GM10248 (cell line): ENCODE measurements at regions of chr11 and their contacts with region 1.

Region 1: DNA sequence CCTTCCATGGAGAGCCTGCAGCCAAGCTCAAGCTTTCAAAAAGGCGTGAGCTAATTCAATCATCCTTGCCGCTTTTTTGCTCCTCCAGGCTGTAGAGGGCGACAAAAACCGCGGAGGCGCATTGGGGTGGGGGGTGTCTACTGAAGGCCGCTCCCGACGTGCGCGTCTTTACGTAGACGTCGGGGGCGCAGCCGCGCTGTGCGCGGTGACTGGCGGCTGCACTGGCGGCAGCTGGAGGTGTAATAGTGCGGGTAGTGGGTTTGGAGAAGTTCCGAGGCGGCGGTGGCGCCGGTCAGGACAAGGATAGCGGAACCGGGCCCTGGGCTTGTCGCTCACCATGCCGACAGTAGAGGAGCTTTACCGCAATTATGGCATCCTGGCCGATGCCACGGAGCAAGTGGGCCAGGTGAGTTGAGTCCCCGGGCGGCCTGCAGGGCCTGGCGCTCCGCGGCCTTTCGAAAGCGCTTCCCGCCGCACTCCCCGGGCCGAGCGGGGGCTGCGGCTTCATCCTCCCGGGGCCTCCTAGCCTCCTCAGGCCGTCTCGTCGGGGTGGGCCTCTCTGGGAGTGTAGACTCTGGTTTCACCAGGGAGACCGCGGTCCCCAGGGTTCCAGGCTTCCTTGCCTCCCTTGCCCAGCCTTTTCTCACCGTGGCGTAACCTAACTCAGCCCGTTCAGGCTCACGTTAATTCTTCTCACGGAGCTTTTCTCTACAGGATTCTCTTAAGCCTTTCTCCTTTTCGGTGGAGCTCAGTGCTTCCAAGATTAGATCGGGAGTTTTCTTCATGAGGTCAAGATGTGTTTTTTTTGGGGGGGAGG is at the start of gene API5:
- DNase-seq: peak; percentile 86
- CTCF ChIP-seq: peak; percentile 90

Region 2: GRCh38 chr11:43298397-43298796 is 13.6 kb before region 1 on chr11:
- CTCF ChIA-PET with region 1: interaction called, 18 read pairs
- POLR2A ChIA-PET with region 1: interaction called, 3 read pairs
- DNase-seq: no peak
- CTCF ChIP-seq: no peak

Region 3: DNA sequence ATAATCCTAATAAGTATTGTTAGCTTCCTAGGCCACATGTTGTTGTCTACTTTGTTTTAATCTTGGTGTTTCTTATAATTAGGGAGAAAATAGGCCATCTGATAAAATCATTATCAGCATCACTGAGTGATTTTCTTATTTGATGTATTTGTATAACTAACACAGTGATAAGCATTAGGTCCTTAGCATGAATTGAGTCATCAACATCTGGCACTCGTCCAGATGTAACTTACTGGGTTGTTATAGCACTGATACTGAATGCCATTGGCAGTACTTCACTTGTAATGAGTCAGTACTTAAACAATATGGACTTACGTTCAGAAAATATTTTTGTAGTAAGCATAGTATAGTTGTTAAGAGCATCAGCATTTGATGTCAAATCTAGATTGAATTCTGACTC is 16.0 kb after region 1 on chr11:
- CTCF ChIA-PET with region 1: interaction called, 16 read pairs
- POLR2A ChIA-PET with region 1: no interaction called
- DNase-seq: no peak
- CTCF ChIP-seq: no peak

Region 4: DNA sequence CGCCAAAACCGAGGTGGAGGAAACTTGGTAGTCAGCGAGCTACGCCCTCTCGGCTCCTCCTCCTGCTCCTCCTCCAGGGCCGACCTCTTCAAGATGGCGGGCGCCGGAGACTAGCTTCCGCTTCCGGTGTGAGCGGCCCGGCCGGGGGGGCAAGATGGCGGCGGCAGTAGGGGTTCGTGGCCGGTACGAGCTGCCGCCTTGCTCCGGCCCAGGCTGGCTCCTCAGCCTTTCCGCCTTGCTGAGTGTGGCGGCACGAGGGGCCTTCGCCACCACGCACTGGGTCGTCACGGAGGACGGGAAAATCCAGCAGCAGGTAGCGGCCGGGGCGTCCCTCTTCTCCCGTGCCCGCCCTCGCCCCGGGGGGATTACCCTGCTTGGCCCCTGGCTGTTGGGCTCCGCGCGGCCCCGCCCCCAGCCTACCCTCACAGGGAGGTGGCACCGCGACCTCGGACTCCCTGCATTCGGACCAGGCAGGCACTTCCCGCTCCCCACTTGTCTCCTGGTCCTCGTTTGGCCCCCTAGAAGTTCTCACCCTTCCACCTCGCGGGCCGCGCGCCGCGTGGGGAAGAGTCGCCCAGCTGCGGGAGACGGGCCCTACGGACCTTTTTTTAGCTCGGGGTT is 46.9 kb after region 1 on chr11 and contains the start of gene TTC17:
- CTCF ChIA-PET with region 1: interaction called, 28 read pairs
- POLR2A ChIA-PET with region 1: no interaction called
- DNase-seq: peak; percentile 93
- CTCF ChIP-seq: no peak

Region 5: GRCh38 chr11:43419460-43419859 is 107.5 kb after region 1 on chr11:
- CTCF ChIA-PET with region 1: interaction called, 36 read pairs
- POLR2A ChIA-PET with region 1: no interaction called
- DNase-seq: peak; percentile 18
- CTCF ChIP-seq: peak; percentile 64

Region 6: GRCh38 chr11:43567396-43567975 is 255.5 kb after region 1 on chr11:
- CTCF ChIA-PET with region 1: interaction called, 15 read pairs
- POLR2A ChIA-PET with region 1: no interaction called
- DNase-seq: peak; percentile 67
- CTCF ChIP-seq: peak; percentile 67